ENCODE measurements at regions of chr1 and their contacts with region 1.

Region 1: DNA sequence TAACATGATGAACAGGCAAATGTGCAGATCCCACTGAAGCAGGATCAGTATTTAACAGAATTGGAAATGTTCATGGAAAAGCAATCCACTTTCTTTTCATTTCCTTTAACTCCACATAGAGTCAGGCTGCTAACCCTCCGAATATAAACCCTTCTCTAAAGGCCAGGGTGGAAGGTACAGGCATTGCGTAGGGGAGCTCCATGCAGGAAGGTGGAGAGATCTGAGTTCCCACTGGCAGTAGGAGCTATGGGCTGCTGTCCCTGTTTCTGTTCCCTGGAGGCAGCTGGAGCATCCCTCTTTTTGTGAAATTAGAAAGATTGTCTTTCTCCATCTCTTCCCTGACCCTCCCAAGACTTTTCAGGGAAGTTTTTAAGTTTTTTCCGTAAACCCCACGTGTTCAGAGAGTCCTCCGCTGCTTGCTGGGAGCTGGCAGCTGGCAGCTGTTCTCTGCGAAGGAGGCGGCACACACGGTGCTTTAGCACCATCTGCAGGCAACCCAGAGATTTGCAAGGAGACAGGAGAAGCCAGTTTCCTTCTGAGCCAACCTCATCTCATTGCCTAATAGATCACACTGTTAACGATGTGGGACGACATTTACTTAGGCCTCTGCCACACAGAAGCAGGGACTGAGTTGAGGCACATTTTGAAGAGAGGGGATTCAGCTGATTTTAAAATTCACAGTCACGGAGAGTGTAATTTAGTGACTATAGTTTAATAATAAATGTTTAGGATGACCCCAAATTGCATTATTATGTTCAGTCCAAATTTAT is 55.4 kb upstream of the HOOK1 start:
- DNase-seq: peak in 1 of 2 donors; percentile 94
- H3K4me3 ChIP-seq: no peak overlapping the region
- H3K27ac ChIP-seq: peak overlapping the region; percentile 74
- H3K4me1 ChIP-seq: peaks cover 14% of the 10 kb centered on the region
- H3K27me3 ChIP-seq: no peaks in the 10 kb centered on the region
- CTCF ChIP-seq: peak; percentile 85 to 95 (median 85)
- POLR2A ChIP-seq: no peak

Region 2: DNA sequence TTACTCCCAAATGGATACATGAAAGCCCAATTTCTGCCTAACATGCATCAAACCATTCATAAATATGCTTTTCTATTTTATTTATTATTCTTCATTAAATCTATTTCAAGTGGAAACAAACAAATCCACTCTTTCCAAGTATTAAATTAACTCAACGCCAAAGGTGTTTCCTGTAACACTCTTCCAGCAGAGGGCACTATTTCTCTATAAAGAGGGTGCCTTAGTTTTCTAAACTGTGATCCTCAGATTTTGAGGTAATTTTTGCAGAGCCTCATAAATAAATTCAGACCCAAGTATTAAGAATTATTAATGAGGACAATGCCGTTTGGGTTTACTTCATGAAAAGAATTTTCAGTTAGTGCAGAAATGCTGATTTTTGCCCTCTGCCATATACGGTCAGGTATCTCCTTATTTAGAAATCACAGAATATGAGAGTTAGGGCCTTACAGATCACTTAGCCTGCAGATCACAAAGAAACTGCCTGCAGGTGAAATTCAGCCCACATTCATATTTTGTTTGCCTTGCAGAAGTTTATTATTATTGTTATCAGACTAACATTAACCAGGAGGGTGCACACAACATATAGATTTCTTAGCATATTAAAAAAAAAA is 1019.4 kb before region 1 on chr1:
- intact Hi-C with region 1: loop called (anchors 5 kb)
- DNase-seq: no peak
- H3K4me3 ChIP-seq: no peak overlapping the region
- H3K27ac ChIP-seq: no peak overlapping the region
- H3K4me1 ChIP-seq: no peaks in the 10 kb centered on the region
- H3K27me3 ChIP-seq: no peaks in the 10 kb centered on the region
- CTCF ChIP-seq: peak; percentile 80 to 85 (median 82)
- POLR2A ChIP-seq: no peak

Region 3: GRCh38 chr1:59879574-59879973 is 120.2 kb after region 1 on chr1:
- intact Hi-C with region 1: no loop called
- DNase-seq: no peak
- H3K4me3 ChIP-seq: no peak overlapping the region
- H3K27ac ChIP-seq: no peak overlapping the region
- H3K4me1 ChIP-seq: no peaks in the 10 kb centered on the region
- H3K27me3 ChIP-seq: no peaks in the 10 kb centered on the region
- CTCF ChIP-seq: no peak
- POLR2A ChIP-seq: no peak